ENCODE measurements at regions of chr12 and their contacts with region 1.

Region 1: GRCh38 chr12:31524791-31525495 is 66.0 kb downstream of the DENND5B start:
- DNase-seq: no peak
- ATAC-seq: no peak
- H3K4me3 ChIP-seq: no peak overlapping the region
- H3K27ac ChIP-seq: no peak overlapping the region
- H3K4me1 ChIP-seq: peaks cover 0 to 4% (median 3%) of the 10 kb centered on the region in 3 donors
- H3K27me3 ChIP-seq: no peaks in the 10 kb centered on the region
- CTCF ChIP-seq: no peak

Region 2: GRCh38 chr12:31589904-31590641 is 65.1 kb after region 1 on chr12:
- intact Hi-C with region 1: loop called in 1 of 3 experiments (anchors 10 kb)
- DNase-seq: peak; percentile 76 to 91 (median 80)
- ATAC-seq: peak; percentile 75 to 81 (median 77)
- H3K4me3 ChIP-seq: peak overlapping the region; percentile 77 to 99 (median 96)
- H3K27ac ChIP-seq: peak overlapping the region; percentile 90 to 97 (median 96)
- H3K4me1 ChIP-seq: peaks cover 0 to 12% (median 7%) of the 10 kb centered on the region in 3 donors
- H3K27me3 ChIP-seq: no peaks in the 10 kb centered on the region
- CTCF ChIP-seq: no peak

Measured in pancreas (tissue), 10 donors.